Endothelial cell of umbilical vein (primary cell): ENCODE measurements at regions of chr17 and their contacts with region 1.

Region 1: GRCh38 chr17:43694077-43694870 is 32.6 kb upstream of the MEOX1 start:
- DNase-seq: peak; percentile 76
- H3K4me3 ChIP-seq: no peak overlapping the region
- H3K27ac ChIP-seq: no peak overlapping the region
- H3K4me1 ChIP-seq: no peaks in the 10 kb centered on the region
- H3K27me3 ChIP-seq: no peaks in the 10 kb centered on the region
- CTCF ChIP-seq: peak; percentile 83 to 84
- POLR2A ChIP-seq: no peak

Region 2: DNA sequence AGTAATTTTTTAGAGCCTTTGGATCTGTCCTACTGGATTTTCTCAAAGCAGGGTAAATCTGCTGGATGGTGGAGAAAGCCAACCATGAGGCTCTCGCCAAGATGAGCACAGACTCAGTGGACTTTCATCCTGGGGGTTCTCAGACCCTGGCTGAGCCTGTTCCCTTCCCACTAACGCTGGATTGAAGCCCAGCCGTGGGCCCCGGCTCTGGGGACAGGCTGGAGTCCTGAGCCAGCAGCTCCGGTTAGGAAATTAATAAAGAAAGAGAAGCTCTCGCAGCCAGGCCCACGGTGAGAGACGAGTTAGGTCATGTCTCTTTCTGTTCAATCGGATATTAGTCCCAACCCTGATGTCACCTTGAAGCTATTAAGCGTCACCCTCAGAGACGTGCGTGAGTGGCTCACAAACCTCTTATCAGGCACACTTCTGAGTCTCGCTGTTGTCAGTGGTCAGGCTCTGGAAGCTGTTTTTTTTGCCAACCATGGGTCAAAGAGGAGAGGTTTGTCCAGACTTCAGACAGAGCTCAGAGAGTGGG is 59.6 kb before region 1 on chr17:
- CTCF ChIA-PET with region 1: no interaction called
- POLR2A ChIA-PET with region 1: no interaction called
- dilution Hi-C with region 1: no loop called
- intact Hi-C with region 1: no loop called
- DNase-seq: no peak
- H3K4me3 ChIP-seq: no peak overlapping the region
- H3K27ac ChIP-seq: no peak overlapping the region
- H3K4me1 ChIP-seq: peaks cover 8% of the 10 kb centered on the region
- H3K27me3 ChIP-seq: no peaks in the 10 kb centered on the region
- CTCF ChIP-seq: no peak
- POLR2A ChIP-seq: no peak

Region 3: GRCh38 chr17:43713494-43714162 is 19.4 kb after region 1 on chr17:
- CTCF ChIA-PET with region 1: interaction called, 14 read pairs
- POLR2A ChIA-PET with region 1: no interaction called
- dilution Hi-C with region 1: no loop called
- intact Hi-C with region 1: no loop called
- DNase-seq: peak; percentile 21
- H3K4me3 ChIP-seq: peak overlapping the region; percentile 48 to 53 (median 53)
- H3K27ac ChIP-seq: peak overlapping the region; percentile 6
- H3K4me1 ChIP-seq: peaks cover 16% of the 10 kb centered on the region
- H3K27me3 ChIP-seq: no peaks in the 10 kb centered on the region
- CTCF ChIP-seq: no peak
- POLR2A ChIP-seq: no peak

Region 4: DNA sequence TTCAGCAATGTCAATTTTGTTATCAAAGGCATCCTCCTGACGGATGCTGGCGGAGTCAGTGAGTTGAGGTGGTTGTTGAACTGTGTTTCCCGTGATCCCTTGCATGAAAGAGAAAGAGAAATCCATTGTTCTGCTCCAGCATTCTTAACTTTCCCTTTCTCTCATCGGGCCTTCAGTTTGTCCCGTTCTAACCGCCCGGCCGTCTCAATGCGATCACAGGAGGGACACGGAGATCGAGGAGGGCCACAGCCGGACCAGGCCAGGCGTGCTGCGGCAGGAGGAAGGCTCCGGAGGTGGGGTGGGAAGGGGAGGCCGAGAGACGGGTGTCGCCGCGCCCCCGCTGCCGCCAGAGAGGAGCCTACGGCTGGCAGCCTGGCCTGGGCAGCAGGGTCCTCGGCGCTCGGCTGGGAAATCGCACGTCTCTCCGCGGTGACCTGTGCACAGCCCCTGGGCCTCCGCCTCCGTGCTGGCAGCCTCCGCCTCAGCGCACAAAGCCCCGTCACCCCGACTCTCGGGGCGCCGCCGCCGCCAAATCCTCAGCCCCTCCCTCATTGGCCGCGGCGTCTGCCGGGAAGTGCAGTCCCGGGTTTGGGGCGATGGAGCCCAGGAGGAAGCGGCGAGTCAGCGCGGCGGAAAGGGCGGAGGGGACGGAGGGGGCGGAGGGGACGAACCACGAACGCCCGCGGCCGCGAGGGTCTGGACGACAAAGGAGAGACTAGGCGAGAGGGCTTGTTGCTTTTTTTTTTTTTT is 26.2 kb after region 1 on chr17:
- CTCF ChIA-PET with region 1: interaction called, 4 read pairs
- POLR2A ChIA-PET with region 1: no interaction called
- dilution Hi-C with region 1: no loop called
- intact Hi-C with region 1: loop called (anchors 1 kb)
- DNase-seq: peak; percentile 70
- H3K4me3 ChIP-seq: peak overlapping the region; percentile 57 to 65 (median 64)
- H3K27ac ChIP-seq: peak overlapping the region; percentile 83
- H3K4me1 ChIP-seq: peaks cover 6% of the 10 kb centered on the region
- H3K27me3 ChIP-seq: no peaks in the 10 kb centered on the region
- CTCF ChIP-seq: no peak
- POLR2A ChIP-seq: peak; percentile 64

Region 5: GRCh38 chr17:43750154-43750553 is 55.9 kb after region 1 on chr17:
- CTCF ChIA-PET with region 1: interaction called, 414 read pairs
- POLR2A ChIA-PET with region 1: no interaction called
- dilution Hi-C with region 1: no loop called
- intact Hi-C with region 1: no loop called
- DNase-seq: no peak
- H3K4me3 ChIP-seq: no peak overlapping the region
- H3K27ac ChIP-seq: no peak overlapping the region
- H3K4me1 ChIP-seq: no peaks in the 10 kb centered on the region
- H3K27me3 ChIP-seq: peaks cover 5 to 14% of the 10 kb centered on the region in 2 experiments
- CTCF ChIP-seq: no peak
- POLR2A ChIP-seq: no peak

Region 6: DNA sequence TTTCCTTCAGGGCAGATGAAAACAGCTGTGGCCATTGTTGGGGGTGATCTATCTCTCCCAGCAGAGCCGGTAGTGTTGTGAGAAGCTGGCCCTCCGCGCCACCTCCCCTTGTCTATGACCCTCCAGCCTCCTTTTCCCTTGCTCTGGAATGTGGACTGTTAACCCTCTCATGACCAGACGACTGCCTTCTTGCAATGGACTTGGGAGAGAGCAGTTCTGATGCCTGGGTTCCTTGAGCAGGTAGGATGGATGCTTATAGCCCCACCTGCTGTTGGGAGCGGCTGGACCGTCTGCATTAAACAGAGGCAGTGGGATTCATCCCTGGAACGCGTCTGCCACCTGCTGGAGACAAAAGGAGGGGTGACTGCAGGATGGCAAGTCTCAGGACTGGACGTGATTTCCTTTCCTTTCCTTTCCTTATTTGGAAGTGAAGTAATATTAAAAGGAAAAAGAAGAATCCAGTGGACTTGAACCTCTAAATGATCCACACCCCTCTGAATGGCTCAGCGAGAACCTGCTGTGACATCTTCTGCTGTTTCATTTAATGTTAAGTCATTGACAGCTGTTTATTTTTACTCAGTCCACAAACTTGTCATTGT is 66.1 kb after region 1 on chr17:
- CTCF ChIA-PET with region 1: interaction called, 414 read pairs
- POLR2A ChIA-PET with region 1: no interaction called
- dilution Hi-C with region 1: no loop called
- intact Hi-C with region 1: loop called (anchors 1 kb)
- DNase-seq: peak; percentile 93
- H3K4me3 ChIP-seq: no peak overlapping the region
- H3K27ac ChIP-seq: no peak overlapping the region
- H3K4me1 ChIP-seq: peaks cover 2% of the 10 kb centered on the region
- H3K27me3 ChIP-seq: peaks cover 8 to 13% of the 10 kb centered on the region in 2 experiments
- CTCF ChIP-seq: peak; percentile 97 to 100
- POLR2A ChIP-seq: no peak

Region 7: DNA sequence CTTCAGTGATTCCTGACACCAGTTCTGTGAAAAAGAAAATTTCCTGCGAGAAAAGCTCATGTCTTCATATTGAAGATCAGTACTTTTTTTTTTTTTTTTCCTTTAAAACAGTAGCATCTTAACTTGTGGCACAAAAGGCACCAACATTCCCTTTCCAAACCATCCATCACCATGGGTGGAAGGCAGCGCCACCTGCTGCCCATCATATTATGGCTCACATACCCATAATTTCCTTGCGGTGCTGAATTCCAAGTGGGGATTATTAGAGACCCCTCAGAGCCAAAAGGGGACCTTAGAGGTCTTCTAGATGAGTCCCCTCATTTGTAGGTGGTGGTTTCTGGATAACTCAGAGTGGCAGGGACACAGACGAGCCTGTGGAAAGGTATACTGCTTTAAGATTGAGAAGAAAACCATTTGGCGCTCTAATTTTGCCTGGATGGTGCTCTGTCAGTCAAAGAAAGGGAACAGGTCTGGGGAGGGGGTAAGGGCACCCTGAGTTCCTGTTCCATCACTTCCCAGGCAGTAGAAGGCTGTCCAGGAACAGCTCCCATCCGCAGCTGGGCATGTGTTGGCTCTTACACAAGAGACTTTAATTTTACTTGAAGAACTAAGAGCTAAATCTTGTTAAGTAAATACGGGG is 72.3 kb after region 1 on chr17:
- CTCF ChIA-PET with region 1: interaction called, 414 read pairs
- POLR2A ChIA-PET with region 1: no interaction called
- dilution Hi-C with region 1: no loop called
- intact Hi-C with region 1: no loop called
- DNase-seq: peak; percentile 56
- H3K4me3 ChIP-seq: no peak overlapping the region
- H3K27ac ChIP-seq: no peak overlapping the region
- H3K4me1 ChIP-seq: peaks cover 2% of the 10 kb centered on the region
- H3K27me3 ChIP-seq: no peaks in the 10 kb centered on the region
- CTCF ChIP-seq: peak; percentile 84 to 93
- POLR2A ChIP-seq: no peak